Activated B cell treated with CpG ODN at 0.5 μM for 24 hours (primary cell): ENCODE measurements at regions of chr2 and their contacts with region 1.

Region 1: DNA sequence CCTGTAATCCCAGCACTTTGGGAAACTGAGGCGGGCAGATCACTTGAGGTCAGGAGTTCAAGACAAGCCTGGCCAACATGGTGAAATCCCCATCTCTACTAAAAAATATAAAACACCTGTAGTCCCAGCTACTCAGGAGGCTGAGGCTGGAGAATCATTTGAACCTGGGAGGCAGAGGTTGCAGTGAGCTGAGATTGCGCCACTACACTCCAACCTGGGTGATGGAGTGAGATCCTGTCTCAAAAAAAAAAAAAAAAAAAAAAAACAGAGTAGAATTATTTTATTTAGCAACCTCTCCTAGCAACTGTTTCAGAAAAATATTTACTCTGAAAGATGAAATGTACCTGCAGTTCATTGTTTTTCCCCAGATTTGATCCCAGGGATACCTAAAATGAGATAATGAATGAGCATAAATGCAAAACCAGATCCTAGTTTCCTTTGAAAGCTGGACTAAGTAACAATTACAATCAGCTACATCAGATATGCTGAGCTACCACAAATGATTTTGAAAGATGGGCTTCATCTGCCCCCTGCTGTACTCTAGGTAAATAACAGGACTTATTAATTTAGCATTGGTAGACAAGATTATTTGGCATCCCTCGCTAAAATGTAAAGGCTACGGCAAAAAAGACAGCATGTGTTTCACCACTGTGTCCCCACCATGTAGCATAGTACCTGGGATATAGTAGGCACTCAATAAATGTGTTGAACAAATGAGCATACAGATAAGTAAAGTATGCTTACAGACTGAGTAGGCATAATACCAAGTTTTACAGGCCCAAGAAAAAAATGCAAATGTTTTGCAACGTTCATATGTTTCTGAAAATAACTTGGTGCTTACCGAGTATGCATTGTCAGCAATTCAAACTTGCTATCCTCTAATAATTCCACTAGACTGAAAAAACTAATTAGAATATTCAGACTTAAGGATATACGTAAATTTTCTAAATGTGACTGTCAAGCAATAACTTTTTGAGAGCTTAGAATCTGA is 102.5 kb downstream of the ATL2 start:
- DNase-seq: no peak
- ATAC-seq: peak; percentile 56
- H3K4me3 Mint-ChIP-seq: no peak overlapping the region
- H3K27ac Mint-ChIP-seq: no peak overlapping the region
- H3K4me1 Mint-ChIP-seq: peaks cover 3% of the 10 kb centered on the region
- H3K27me3 Mint-ChIP-seq: no peaks in the 10 kb centered on the region
- CTCF ChIP-seq: no peak

Region 2: GRCh38 chr2:37168217-37168981 is 1106.2 kb before region 1 on chr2:
- CTCF ChIA-PET with region 1: no interaction called
- POLR2A ChIA-PET with region 1: no interaction called
- intact Hi-C with region 1: loop called (anchors 2 kb)
- DNase-seq: no peak
- ATAC-seq: peak; percentile 86
- H3K4me3 Mint-ChIP-seq: no peak overlapping the region
- H3K27ac Mint-ChIP-seq: no peak overlapping the region
- H3K4me1 Mint-ChIP-seq: no peaks in the 10 kb centered on the region
- H3K27me3 Mint-ChIP-seq: no peaks in the 10 kb centered on the region
- CTCF ChIP-seq: no peak